IMR-90 (cell line): ENCODE measurements at regions of chr17 and their contacts with region 1.

Region 1: GRCh38 chr17:65243802-65244220 is 106.6 kb downstream of the RGS9 start:
- DNase-seq: peak; percentile 24
- ATAC-seq: 0 out of 2 replicates have a peak, but pooled peaks have one; percentile 24
- H3K4me3 ChIP-seq: no peak overlapping the region
- H3K27ac ChIP-seq: no peak overlapping the region
- H3K4me1 ChIP-seq: no peaks in the 10 kb centered on the region
- H3K27me3 ChIP-seq: peaks cover 23% of the 10 kb centered on the region
- CTCF ChIP-seq: no peak
- POLR2A ChIP-seq: no peak
- RAD21 ChIP-seq: no peak

Region 2: GRCh38 chr17:65868881-65869280 is 625.1 kb after region 1 on chr17:
- CTCF ChIA-PET with region 1: no interaction called
- POLR2A ChIA-PET with region 1: interaction called, 14 read pairs
- dilution Hi-C with region 1: no loop called
- in situ Hi-C with region 1: no loop called
- intact Hi-C with region 1: no loop called
- DNase-seq: no peak
- ATAC-seq: no peak
- H3K4me3 ChIP-seq: no peak overlapping the region
- H3K27ac ChIP-seq: no peak overlapping the region
- H3K4me1 ChIP-seq: no peaks in the 10 kb centered on the region
- H3K27me3 ChIP-seq: no peaks in the 10 kb centered on the region
- CTCF ChIP-seq: no peak
- POLR2A ChIP-seq: no peak
- RAD21 ChIP-seq: no peak